ENCODE measurements at regions of chr2 and their contacts with region 1.

Region 1: DNA sequence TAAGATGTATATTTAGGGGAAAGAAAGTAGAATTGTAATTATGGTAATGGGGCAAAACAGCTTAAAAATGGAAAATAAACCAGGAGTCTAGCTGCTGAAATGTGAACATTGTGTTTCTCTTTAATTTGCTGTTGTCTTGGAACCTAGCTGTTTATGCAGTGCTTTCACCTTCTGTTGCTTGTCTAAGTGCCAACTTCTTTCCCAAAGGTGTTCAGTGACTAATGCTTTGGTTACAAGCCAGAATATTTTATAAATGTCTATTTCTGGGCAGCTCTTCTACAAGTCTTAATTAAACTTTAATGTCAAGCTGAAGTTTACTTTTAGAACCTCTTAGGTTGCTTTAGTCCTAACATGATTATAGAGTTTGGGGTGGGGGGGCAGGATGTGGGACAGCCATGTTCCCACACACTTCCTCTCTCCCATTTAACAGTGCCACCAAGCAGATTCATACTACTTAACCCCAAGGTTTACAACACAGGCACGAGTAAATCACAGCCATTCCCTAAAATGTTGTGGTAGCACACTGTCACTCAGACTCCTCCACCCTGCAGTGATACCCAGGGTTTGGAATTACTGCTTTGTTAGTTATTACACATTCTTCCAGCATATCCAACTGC is 60.6 kb downstream of the ITGA4 start:
- DNase-seq: no peak

Region 2: DNA sequence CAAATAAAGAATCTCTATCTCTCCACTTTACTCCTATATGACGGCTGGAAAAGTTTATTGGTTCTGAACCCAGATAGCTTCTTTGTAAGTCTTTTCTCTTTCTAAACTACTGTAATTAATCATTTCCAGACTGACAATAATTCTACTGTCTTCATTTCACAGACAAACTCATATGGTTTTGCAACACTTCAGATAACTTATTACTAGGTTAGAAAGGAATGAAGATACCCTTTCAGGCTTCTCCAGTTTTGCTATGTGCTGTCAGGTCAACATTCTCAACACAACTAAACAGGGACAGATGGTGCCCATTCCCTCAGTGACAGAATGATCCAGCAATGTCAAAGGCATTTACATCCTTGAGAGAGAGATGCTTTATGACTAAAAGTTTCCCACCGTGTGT is 259.1 kb before region 1 on chr2:
- intact Hi-C with region 1: loop called in 1 of 2 experiments (anchors 10 kb)
- DNase-seq: no peak

Measured in posterior vena cava (tissue), 2 donors.